ENCODE measurements at regions of chr2 and their contacts with region 1.

Region 1: DNA sequence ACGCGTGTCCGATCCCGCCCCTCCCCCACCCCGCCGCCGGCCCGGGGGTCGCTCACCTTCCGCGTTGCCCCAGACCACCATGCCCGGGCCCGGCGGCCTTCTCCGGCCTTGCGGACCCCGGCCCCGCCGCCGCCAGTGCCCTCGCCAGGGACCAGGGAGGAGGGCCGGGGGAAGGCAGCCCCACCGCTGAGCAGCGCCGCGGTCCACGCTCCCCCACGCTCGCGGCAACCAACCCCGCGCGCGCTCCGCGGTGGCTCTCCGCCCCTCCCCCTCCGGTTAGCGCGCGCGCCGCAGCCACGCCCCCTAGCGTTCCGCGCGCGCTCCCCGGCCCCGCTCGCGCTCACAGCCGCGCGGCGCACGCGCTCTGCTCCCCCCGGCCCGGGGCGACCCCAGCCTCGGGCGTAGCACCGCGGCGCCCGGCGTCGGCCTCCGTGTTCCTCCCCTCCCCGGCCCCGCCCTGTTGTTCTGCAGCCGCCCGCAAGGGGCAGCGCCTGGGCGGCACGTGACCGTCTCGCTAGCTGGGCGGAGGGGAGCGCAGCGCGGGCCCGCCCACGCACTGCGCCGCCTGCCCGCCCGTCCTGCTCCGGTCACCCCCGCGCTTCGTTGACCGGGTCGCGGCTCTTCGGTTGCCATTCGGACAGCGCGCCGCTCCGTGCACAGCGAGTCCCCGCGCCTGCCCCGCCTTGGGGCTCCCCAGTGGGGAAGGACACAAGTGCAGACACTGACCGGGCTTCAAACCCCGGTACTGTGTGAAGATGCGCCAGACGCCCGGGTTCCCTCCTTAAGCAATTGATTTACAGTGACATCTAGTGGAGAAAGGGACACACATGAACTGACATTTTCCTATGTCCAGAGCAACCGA is at the start of gene REV1:
- DNase-seq: peak; percentile 96
- ATAC-seq: peak; percentile 87
- H3K4me3 Mint-ChIP-seq: peak within 1 kb of the TSS; percentile 96
- H3K27ac Mint-ChIP-seq: peak within 1 kb of the TSS; percentile 93
- H3K4me1 Mint-ChIP-seq: peaks cover 35% of the 10 kb centered on the region
- H3K27me3 Mint-ChIP-seq: no peaks in the 10 kb centered on the region
- CTCF ChIP-seq: no peak
- total RNA-seq, gene REV1: 44.5 and 52.1 TPM in 2 replicates

Region 2: DNA sequence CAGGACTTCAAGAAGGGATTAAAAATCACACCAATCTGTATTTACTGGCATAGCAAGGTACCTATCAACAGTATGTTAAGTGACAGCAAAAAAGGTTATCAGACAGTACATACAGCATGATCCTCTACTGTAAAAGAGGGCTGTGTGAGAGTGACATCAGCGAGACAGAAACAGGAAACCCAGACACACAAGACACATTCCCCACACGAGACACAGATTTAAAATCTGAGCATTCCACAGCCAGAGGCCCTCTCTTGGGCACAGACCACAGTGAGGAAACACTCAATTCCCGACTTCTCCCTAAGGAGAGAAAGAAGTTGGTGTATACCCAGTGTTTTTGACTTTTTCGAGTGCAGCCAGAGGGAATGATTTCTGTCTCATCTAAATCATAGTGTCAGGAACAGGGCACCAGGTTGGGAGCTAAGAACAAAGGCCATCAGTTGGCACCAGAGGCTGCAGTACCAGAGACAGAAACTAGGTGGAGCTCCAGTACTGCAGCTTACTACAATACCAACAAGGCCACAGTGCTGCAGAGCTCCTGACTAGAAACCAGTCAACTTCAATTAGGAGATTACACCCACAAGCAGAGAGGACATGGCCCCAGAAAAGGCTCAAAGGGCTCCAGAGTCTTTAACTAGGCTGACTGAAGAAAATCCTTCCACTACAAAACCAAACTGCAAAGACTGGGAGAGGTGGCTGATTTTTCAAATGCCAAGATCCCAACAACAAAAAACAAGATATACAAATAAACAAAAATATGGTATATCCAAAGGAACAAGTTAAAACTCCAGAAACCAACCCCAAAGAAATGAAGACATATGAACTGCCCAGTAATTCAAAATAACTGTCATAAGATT is 840.6 kb before region 1 on chr2:
- CTCF ChIA-PET with region 1: interaction called, 5 read pairs
- POLR2A ChIA-PET with region 1: no interaction called
- intact Hi-C with region 1: loop called (anchors 1 kb)
- DNase-seq: peak; percentile 46
- ATAC-seq: peak; percentile 99
- H3K4me3 Mint-ChIP-seq: no peak overlapping the region
- H3K27ac Mint-ChIP-seq: peak overlapping the region; percentile 18
- H3K4me1 Mint-ChIP-seq: peaks cover 19% of the 10 kb centered on the region
- H3K27me3 Mint-ChIP-seq: no peaks in the 10 kb centered on the region
- CTCF ChIP-seq: peak; percentile 99

Region 3: GRCh38 chr2:99066075-99066958 is 423.7 kb before region 1 on chr2:
- CTCF ChIA-PET with region 1: no interaction called
- POLR2A ChIA-PET with region 1: no interaction called
- intact Hi-C with region 1: loop called (anchors 10 kb)
- DNase-seq: no peak
- ATAC-seq: peak; percentile 85
- H3K4me3 Mint-ChIP-seq: no peak overlapping the region
- H3K27ac Mint-ChIP-seq: no peak overlapping the region
- H3K4me1 Mint-ChIP-seq: no peaks in the 10 kb centered on the region
- H3K27me3 Mint-ChIP-seq: no peaks in the 10 kb centered on the region
- CTCF ChIP-seq: no peak

Region 4: DNA sequence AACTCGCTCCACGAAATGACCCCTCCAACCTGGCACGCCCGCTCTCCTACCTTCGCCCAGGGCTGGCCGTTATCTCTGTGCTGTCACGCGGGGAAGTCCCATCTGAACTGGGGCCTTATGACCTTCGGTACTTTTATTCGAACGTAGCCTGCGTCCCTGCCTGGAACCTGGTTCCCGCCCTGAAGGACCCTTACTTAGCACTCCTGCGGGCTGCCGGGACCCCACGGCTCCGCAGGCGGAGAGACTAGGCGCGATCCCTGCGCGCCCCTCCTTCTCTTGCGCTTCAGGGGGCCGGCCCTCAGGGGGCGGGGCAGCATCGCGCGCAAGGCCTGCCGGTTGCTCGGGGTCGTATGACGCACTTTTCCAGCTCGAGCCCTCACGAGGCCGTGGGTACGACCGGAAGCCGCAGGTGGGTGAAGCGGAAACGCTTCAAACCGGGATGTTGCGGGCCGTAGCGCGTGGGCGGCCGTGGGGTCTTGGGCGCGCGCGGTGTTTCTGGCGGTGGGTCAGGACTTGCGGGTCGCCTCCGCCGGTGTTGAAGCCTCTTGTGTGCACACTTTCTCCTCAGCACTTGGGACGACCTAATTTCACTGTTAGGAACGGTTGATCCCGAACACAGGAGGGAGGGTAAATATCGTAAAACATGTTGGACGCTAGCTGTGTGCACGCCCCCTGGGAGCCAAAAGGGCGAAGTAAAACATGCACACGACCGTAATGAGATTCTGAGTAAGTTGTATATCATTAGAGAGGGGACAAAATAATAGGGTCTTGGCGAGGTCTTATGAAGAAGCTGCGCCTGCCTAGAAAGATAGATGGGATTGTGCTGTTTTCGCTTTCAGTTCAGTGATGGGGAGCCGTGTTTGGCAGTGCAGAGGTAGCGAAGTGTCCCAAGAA is 335.1 kb before region 1 on chr2 and contains the starts of genes LIPT1 and TSGA10:
- CTCF ChIA-PET with region 1: no interaction called
- POLR2A ChIA-PET with region 1: interaction called, 3 read pairs
- intact Hi-C with region 1: loop called (anchors 1 kb)
- DNase-seq: peak; percentile 92
- ATAC-seq: peak; percentile 91
- H3K4me3 Mint-ChIP-seq: peak within 1 kb of the TSS; percentile 90
- H3K27ac Mint-ChIP-seq: peak within 1 kb of the TSS; percentile 92
- H3K4me1 Mint-ChIP-seq: peaks cover 55% of the 10 kb centered on the region
- H3K27me3 Mint-ChIP-seq: no peaks in the 10 kb centered on the region
- CTCF ChIP-seq: no peak
- total RNA-seq, gene LIPT1: 15.1 and 18.1 TPM in 2 replicates
- total RNA-seq, gene TSGA10: 18.5 and 20.4 TPM in 2 replicates

Region 5: GRCh38 chr2:99403524-99403923 is 86.5 kb before region 1 on chr2:
- CTCF ChIA-PET with region 1: interaction called, 3 read pairs
- POLR2A ChIA-PET with region 1: no interaction called
- intact Hi-C with region 1: loop called (anchors 2 kb)
- DNase-seq: no peak
- ATAC-seq: no peak
- H3K4me3 Mint-ChIP-seq: no peak overlapping the region
- H3K27ac Mint-ChIP-seq: no peak overlapping the region
- H3K4me1 Mint-ChIP-seq: no peaks in the 10 kb centered on the region
- H3K27me3 Mint-ChIP-seq: no peaks in the 10 kb centered on the region
- CTCF ChIP-seq: no peak

Region 6: DNA sequence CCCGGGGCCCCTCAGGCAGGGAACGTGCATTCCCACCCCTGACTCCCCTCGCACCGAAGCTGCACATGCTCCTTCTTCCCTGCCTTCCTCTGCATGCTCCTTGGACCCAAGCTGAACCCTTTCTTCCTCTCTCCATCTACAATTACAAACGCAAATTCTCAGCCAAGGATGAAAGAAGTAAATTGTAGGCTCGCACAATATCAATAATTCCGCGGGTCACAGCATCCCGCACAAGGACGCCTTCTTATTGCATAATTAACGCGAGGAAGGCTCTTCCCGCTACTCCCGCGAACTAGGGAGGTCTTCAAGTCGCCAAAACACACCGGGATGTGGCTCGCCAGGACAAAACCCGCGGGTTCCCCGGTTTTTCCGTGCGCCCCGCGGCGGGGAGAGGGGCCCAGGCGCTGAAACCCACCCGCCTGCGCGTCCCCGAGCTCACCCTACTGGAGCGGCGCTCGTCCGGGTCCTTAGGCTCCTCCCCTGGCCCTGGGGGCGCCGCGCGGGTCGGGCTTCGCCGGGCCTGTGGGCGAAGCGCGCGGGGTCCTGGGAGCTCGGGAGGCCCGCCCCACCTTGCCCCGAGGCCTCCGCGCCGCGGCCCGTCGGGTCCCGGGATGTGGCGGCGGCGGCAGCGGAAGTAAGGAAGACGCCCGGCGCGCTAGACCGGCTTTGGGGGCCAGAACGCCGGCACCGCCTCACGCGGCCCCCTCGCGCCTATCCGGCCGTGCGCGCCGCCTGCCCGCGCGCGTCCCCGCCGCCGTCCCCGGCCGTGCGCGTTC is 927.1 kb after region 1 on chr2 and contains the start of gene CHST10:
- CTCF ChIA-PET with region 1: no interaction called
- POLR2A ChIA-PET with region 1: no interaction called
- intact Hi-C with region 1: loop called (anchors 5 kb)
- DNase-seq: peak; percentile 74
- ATAC-seq: peak; percentile 96
- H3K4me3 Mint-ChIP-seq: peak within 1 kb of the TSS; percentile 94
- H3K27ac Mint-ChIP-seq: peak within 1 kb of the TSS; percentile 80
- H3K4me1 Mint-ChIP-seq: peaks cover 18% of the 10 kb centered on the region
- H3K27me3 Mint-ChIP-seq: no peaks in the 10 kb centered on the region
- CTCF ChIP-seq: no peak
- total RNA-seq, gene CHST10: 19.8 and 21.0 TPM in 2 replicates

Measured in activated B cell treated with CpG ODN at 0.5 μM for 24 hours (primary cell).